Naive thymus-derived CD4-positive, alpha-beta T cell (primary cell): ENCODE measurements at regions of chr4 and their contacts with region 1.

Region 1: GRCh38 chr4:185142912-185143595 is at the start of gene SLC25A4:
- DNase-seq: peak; percentile 68 to 81 (median 75)
- ATAC-seq: peak; percentile 95
- H3K4me3 ChIP-seq: peak within 1 kb of the TSS; percentile 57
- H3K4me3 Mint-ChIP-seq: peak within 1 kb of the TSS; percentile 84 to 95 (median 90)
- H3K27ac ChIP-seq: peak within 1 kb of the TSS; percentile 52
- H3K27ac Mint-ChIP-seq: peak within 1 kb of the TSS in 7 of 9 donors; percentile 4 to 89 (median 83)
- H3K4me1 ChIP-seq: peaks cover 4 to 13% of the 10 kb centered on the region in 2 donors
- H3K4me1 Mint-ChIP-seq: peaks cover 11 to 15% (median 12%) of the 10 kb centered on the region in 7 donors
- H3K27me3 ChIP-seq: peaks cover 0 to 3% of the 10 kb centered on the region in 2 donors
- H3K27me3 Mint-ChIP-seq: peaks cover 15 to 69% (median 26%) of the 10 kb centered on the region in 5 donors
- total RNA-seq, gene SLC25A4: 0.60 to 7.2 (median 4.9) TPM

Region 2: DNA sequence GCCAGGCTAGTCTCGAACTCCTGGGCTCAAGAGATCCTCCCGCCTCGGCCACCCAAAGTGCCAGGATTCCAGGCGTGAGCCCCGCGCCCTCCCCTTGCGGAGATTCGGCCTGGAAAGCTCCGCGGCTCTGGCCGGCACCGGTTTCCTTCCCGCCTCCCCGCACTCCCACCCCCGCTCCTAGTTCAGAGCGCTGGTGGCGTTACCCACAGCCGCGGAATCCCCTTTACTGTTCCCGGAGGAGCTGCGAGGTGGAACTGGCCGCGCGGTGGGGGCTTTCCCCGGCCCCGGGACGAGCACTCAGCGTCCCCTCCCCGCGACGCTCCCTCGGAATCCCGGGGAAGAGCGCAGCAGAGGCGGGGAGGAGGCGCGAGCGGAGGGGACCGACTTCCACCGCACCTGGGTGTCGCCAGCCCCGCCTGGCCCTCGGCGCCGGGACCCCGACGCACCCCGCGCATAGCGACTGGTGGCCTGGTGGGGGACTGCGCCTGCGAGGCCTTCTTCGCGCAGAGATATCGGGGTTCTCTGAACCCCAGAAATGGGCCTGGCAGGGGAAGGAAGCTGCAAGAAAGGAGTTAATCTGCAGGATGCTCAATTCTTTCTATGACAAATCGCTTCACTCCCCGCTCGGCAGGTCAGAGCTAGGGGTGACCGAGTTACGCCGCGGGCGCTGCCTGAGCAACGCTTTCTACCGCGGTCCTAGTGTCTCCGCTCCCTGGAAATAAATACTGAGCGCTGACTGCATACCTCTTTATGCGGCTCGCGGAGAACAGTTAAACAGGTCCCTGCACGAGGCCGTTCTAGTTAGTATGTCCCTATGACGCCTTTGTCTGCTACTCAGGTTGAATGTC is 14.6 kb before region 1 on chr4:
- CTCF ChIA-PET with region 1: no interaction called
- POLR2A ChIA-PET with region 1: no interaction called
- intact Hi-C with region 1: loop called in 1 of 2 experiments (anchors 2 kb)
- DNase-seq: peak in 3 of 9 donors; percentile 17 to 31 (median 23)
- ATAC-seq: peak; percentile 58
- H3K4me3 ChIP-seq: peak overlapping the region; percentile 49
- H3K4me3 Mint-ChIP-seq: peak overlapping the region; percentile 57 to 88 (median 80)
- H3K27ac ChIP-seq: no peak overlapping the region
- H3K27ac Mint-ChIP-seq: no peak overlapping the region
- H3K4me1 ChIP-seq: no peaks in the 10 kb centered on the region
- H3K4me1 Mint-ChIP-seq: peaks cover 0 to 8% (median 7%) of the 10 kb centered on the region in 7 donors
- H3K27me3 ChIP-seq: peaks cover 5 to 8% of the 10 kb centered on the region in 2 donors
- H3K27me3 Mint-ChIP-seq: peaks cover 26 to 70% (median 31%) of the 10 kb centered on the region in 5 donors

Region 3: GRCh38 chr4:185165605-185166063 is 22.6 kb after region 1 on chr4:
- CTCF ChIA-PET with region 1: interaction called, 6 read pairs
- POLR2A ChIA-PET with region 1: interaction called, 5 read pairs
- intact Hi-C with region 1: loop called (anchors 1 to 2 kb)
- DNase-seq: peak in 7 of 9 donors; percentile 29 to 77 (median 71)
- ATAC-seq: peak; percentile 81
- H3K4me3 ChIP-seq: peak overlapping the region; percentile 0
- H3K4me3 Mint-ChIP-seq: peak overlapping the region; percentile 40 to 79 (median 66)
- H3K27ac ChIP-seq: no peak overlapping the region
- H3K27ac Mint-ChIP-seq: peak overlapping the region in 7 of 9 donors; percentile 21 to 82 (median 48)
- H3K4me1 ChIP-seq: peaks cover 14% of the 10 kb centered on the region in 2 donors
- H3K4me1 Mint-ChIP-seq: peaks cover 13 to 26% (median 20%) of the 10 kb centered on the region in 7 donors
- H3K27me3 ChIP-seq: no peaks in the 10 kb centered on the region
- H3K27me3 Mint-ChIP-seq: peaks cover 0 to 18% (median 0%) of the 10 kb centered on the region in 5 donors

Region 4: DNA sequence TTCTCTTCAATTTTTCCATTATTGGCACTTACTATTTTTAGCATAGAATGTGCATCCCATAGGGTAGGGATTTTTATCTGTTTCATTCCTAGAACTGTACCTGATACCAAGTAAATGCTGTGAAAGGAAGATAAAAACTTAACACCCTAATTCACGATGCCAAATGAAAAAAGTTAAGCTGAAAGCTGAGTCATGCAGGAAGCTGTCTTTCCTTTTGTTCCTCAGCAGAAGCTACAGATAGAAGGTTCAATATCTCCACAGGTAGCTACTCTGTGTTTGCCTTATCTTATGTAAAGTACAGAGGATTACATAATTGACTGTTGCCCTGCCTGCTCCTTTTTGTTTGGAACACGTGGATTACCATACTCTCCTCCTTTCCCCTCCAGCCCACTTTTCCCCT is 175.6 kb after region 1 on chr4:
- CTCF ChIA-PET with region 1: no interaction called
- POLR2A ChIA-PET with region 1: no interaction called
- intact Hi-C with region 1: no loop called
- DNase-seq: no peak
- ATAC-seq: no peak
- H3K4me3 ChIP-seq: no peak overlapping the region
- H3K4me3 Mint-ChIP-seq: peak overlapping the region in 1 of 10 donors; percentile 60
- H3K27ac ChIP-seq: no peak overlapping the region
- H3K27ac Mint-ChIP-seq: no peak overlapping the region
- H3K4me1 ChIP-seq: no peaks in the 10 kb centered on the region
- H3K4me1 Mint-ChIP-seq: peaks cover 0 to 11% (median 6%) of the 10 kb centered on the region in 7 donors
- H3K27me3 ChIP-seq: no peaks in the 10 kb centered on the region
- H3K27me3 Mint-ChIP-seq: no peaks in the 10 kb centered on the region